Colonic mucosa (tissue), 4 donors: ENCODE measurements at regions of chr3 and their contacts with region 1.

Region 1: DNA sequence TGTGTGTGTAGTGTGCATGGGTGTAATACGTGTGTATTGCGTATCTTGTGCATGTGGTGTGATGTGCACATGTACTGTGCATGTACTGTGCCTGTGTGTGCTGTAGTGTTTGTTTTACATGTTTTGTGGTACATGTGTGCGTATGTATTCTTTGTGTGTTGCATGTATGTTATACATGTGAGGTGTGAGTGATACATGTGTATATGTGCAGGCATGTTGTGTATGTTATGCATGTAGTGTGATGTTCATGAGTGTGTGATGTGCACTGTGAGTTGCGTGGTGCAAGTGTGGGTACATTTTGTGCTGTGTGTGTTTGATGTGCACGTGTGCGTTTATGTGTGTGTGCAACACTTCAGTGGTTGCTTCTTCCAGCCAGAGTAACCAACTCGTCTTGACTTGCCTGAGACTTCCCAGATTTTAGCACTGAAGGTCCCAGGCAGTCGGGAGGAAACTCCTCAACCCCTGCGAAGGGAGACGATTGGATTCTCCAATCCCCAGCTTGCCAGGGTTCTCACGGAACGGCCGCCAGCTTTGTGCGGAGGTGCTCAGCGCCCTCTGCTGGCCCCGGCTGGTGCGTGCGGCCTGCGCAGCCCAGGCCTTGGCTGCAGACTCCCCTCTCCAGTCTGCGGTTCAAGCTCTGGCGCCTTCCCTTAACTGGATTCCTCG is 3.6 kb downstream of the GALNT15 start:
- DNase-seq: peak; percentile 77
- H3K4me3 ChIP-seq: no peak overlapping the region
- H3K27ac ChIP-seq: no peak overlapping the region
- H3K4me1 ChIP-seq: no peaks in the 10 kb centered on the region
- H3K27me3 ChIP-seq: no peaks in the 10 kb centered on the region
- CTCF ChIP-seq: peak; percentile 95

Region 2: DNA sequence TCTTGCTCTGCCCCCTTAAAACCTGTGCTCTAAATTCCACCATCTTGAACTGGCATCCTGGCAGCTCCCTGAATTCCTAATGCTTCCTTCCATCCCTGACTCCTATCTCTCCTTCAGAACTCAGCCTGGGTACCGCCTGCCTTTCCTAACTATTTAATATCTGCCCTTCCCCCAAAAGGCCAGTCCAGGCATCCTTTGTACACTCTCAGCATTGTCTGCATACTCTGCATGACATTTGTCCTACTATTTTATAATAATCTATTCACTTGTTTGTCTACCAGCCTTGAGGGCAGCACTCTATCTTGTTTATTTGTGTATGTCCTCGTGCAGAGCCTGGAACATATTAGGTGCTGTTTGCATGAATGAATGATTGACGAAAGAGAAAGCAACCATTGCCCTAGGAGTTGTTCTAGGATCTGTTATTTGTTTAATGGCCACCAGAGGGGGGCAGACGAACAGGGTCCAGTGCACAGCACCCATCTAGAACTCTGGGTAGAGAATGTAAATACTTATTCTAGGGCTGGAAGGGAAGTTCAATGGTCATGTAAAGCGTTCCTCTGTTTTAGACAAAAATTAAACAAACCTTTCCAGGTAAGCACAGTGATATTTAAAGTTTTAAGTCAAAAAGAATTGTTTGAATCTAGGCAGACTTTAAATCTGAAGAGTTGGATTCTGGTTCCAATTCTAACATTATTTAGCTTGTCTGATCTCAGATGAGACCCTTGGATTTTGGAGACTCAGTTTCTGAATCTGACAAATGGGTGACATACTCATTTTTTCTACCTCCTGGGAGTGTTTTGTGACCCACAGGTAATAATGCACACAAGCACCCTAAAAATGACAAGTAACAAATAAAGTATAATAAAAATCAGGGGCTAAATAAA is 129.4 kb before region 1 on chr3:
- intact Hi-C with region 1: loop called (anchors 2 kb)
- DNase-seq: peak; percentile 64
- H3K4me3 ChIP-seq: no peak overlapping the region
- H3K27ac ChIP-seq: no peak overlapping the region
- H3K4me1 ChIP-seq: no peaks in the 10 kb centered on the region
- H3K27me3 ChIP-seq: no peaks in the 10 kb centered on the region
- CTCF ChIP-seq: peak; percentile 69

Region 3: GRCh38 chr3:16055606-16056209 is 122.4 kb before region 1 on chr3:
- intact Hi-C with region 1: loop called (anchors 2 kb)
- DNase-seq: no peak
- H3K4me3 ChIP-seq: no peak overlapping the region
- H3K27ac ChIP-seq: no peak overlapping the region
- H3K4me1 ChIP-seq: no peaks in the 10 kb centered on the region
- H3K27me3 ChIP-seq: no peaks in the 10 kb centered on the region
- CTCF ChIP-seq: no peak

Region 4: DNA sequence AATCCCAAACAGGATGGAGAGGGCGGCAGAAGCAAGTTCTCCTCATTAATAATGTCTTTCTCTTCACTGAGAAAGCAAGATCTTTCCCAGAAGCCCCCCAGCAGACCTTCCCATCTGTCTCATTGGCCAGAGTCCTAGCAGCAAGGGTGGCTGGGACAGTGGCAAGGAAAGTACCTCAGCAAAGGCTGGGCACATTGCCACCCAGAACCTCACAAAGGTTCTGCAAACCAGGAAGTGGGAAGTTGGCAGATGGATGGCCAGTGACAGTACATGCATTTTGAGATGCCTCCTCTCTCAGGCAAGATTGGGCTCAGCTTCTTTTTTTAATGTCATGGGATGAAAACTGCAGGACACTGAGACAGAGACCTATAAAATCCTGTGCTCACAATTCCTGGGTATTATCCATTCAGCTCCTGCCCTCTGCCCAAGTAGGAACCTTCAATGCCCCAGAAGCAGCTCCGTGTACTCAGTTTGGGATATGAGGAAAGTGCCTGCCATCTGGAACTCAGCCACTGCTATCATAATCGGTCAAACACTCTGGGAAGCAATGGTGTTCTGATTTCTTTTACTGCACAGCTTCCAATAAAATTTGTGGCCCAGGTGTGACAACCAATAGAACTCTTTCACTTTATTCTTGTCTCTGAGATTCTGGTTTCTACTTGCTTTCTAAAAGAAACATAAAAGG is 61.1 kb after region 1 on chr3:
- intact Hi-C with region 1: no loop called
- DNase-seq: no peak
- H3K4me3 ChIP-seq: no peak overlapping the region
- H3K27ac ChIP-seq: no peak overlapping the region
- H3K4me1 ChIP-seq: no peaks in the 10 kb centered on the region
- H3K27me3 ChIP-seq: no peaks in the 10 kb centered on the region
- CTCF ChIP-seq: no peak

Region 5: DNA sequence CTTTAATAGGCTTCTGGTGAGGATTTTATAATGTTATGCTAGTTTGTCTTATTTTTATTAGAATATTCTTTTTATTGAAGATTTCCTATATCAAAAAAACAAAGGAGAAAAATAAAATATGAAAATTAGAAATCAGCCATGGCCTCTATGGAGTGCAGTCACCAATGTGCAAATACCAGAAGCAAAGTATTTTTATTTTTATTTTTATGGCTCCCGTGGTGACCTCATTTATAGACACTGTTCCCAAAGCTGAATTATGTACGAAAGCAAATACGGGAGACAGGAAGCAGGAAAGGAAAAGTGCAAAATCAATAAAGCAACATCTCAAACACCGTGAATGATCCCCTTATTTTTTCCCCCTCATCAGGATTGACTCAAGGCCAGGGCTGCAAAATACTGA is 392.0 kb after region 1 on chr3:
- intact Hi-C with region 1: no loop called
- DNase-seq: no peak
- H3K4me3 ChIP-seq: no peak overlapping the region
- H3K27ac ChIP-seq: no peak overlapping the region
- H3K4me1 ChIP-seq: no peaks in the 10 kb centered on the region
- H3K27me3 ChIP-seq: no peaks in the 10 kb centered on the region
- CTCF ChIP-seq: no peak